Heart right ventricle (tissue), 16 donors: ENCODE measurements at regions of chr14 and their contacts with region 1.

Region 1: DNA sequence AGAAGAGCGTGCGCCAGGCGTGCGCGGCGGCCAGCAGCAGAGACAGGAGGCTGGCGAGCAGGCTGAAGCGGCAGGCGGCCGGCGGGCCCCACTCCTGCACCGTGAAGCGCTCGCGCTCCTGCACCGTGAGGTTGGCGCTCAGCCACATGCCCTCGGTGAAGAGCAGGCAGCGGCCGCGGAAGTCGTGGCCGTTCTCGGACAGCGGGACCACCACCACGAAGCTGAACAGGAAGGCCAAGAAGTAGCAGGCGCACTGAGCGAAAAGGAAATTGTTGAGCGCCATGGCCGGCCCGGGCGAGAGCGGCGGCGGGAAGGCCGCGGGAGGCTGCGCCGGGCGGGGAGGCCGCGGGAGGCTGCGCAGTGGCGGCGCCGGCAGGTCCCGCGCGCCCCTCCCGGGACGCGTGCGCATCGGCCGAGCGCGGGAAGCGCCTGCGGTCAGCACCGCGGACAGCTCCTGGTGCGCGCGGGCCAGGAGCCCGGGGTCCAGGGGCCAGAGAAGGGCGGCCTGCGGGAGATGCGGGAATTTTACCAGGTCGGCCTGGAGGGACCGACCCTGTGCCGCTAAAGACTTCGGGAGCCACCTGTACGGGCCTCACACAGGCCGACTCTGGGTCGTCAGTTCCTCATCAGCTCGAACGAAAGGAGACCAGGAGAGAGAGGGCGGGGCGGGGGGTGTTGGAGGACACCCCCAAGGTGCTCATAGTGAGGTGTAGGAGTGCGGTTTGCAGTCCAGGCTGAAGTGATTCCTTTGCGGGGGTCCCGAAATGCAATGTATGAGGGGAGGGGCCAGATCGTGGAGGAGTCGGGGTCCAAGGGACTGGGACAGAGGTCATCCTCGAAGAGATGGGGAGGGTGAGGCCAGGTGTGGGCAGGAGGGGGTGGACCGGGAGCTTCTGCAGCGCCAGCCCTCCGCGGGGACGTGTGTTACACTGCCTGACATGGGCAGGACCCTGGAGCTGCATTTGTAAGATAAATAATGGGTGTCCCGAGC is at the start of gene TMEM179:
- DNase-seq: no peak
- ATAC-seq: peak; percentile 51 to 87 (median 76)
- H3K4me3 ChIP-seq: peak within 1 kb of the TSS in 5 of 10 donors; percentile 14 to 30 (median 25)
- H3K27ac ChIP-seq: no peak within 1 kb of the TSS
- H3K4me1 ChIP-seq: peaks cover 0 to 7% (median 4%) of the 10 kb centered on the region in 9 donors
- H3K27me3 ChIP-seq: peaks cover 0 to 80% (median 71%) of the 10 kb centered on the region in 7 donors
- CTCF ChIP-seq: no peak
- total RNA-seq, gene TMEM179: 0.34 to 1.0 (median 0.42) TPM in 5 of 10 donors, not detected in the others

Region 2: DNA sequence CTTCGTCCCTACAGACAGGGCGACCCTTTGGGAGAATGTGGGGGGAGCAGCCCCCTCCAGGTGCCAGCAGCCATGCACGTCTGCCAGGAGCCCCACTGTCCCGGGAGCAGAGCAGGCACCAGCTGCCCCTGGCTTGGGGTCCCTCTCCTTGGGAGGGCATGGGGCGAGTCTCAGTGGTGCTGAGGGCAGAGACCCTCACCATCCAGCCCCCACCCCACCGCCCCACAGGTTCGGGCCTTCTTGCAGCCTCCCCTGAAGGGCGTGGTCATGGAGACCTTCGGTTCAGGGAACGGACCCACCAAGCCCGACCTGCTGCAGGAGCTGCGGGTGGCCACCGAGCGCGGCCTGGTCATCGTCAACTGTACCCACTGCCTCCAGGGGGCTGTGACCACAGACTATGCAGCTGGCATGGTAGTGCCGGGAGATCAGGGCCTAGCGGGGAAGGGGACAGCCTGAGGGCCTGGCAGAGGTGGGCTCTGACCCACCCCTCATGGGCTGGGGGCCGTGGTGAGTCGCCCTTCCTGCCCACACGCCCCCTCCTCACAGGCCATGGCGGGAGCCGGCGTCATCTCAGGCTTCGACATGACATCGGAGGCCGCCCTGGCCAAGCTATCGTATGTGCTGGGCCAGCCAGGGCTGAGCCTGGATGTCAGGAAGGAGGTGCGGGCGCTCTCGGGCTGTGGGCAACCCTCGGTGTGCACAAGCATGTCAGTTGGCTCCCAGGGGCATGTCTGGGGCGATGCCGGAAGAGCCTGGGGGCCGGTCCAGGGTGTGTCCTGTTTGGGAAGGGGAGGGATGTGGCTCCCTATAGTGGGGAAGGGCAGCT is 500.5 kb before region 1 on chr14:
- intact Hi-C with region 1: no loop called
- DNase-seq: no peak
- ATAC-seq: no peak
- H3K4me3 ChIP-seq: no peak overlapping the region
- H3K27ac ChIP-seq: no peak overlapping the region
- H3K4me1 ChIP-seq: no peaks in the 10 kb centered on the region
- H3K27me3 ChIP-seq: peaks cover 0 to 30% (median 5%) of the 10 kb centered on the region in 7 donors
- CTCF ChIP-seq: no peak

Region 3: GRCh38 chr14:104844306-104845032 is 239.7 kb after region 1 on chr14:
- intact Hi-C with region 1: loop called in 1 of 10 experiments (anchors 5 kb)
- DNase-seq: no peak
- ATAC-seq: peak in 7 of 8 donors; percentile 18 to 65 (median 40)
- H3K4me3 ChIP-seq: peak overlapping the region in 9 of 10 donors; percentile 36 to 66 (median 51)
- H3K27ac ChIP-seq: no peak overlapping the region
- H3K4me1 ChIP-seq: peaks cover 5 to 20% (median 17%) of the 10 kb centered on the region in 9 donors
- H3K27me3 ChIP-seq: peaks cover 2 to 84% (median 44%) of the 10 kb centered on the region in 7 donors
- CTCF ChIP-seq: no peak